ENCODE measurements at regions of chr3 and their contacts with region 1.

Region 1: DNA sequence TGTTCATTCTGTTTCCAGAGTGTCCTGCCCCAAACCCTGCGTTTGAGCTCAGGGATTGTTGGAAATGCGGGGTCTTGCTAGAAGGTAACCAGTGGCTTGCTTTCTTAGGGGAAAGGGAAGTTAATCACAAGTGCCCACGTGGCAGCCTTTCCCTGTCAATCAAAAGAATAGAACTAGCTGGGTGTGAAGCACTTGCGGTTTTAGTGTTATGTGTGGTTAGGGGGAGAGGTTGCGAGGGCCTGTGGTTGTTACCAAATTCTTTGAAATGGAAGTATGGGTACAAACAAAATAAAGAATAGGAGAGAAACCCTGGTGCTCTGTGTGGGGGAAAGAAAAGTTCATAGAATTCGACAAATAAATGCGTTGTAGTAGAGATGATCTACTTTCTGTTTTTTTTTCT is 67.6 kb downstream of the FNDC3B start:
- DNase-seq: peak; percentile 74
- H3K4me3 Mint-ChIP-seq: peak overlapping the region; percentile 59
- H3K27ac Mint-ChIP-seq: peak overlapping the region; percentile 89
- H3K4me1 Mint-ChIP-seq: peaks cover 72% of the 10 kb centered on the region
- H3K27me3 Mint-ChIP-seq: no peaks in the 10 kb centered on the region

Region 2: DNA sequence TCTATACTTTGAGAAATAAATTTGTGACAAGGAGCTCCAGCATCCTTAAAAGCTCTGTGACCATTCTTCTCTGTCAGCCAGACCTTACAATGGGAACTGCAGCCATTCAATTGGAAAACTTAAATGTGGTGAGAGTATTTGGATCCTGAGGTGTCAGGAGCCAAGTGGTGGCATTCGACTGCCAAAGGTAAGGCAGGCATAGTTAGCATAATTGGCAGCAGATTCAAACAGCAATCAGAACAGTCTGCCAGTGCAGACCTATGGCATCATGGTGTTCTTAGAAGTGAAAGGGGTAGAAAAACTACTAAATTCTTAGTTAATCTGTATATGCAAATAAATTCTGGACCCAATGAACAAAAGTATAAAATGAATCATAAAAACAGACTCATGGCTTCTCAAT is 85.8 kb before region 1 on chr3:
- CTCF ChIA-PET with region 1: no interaction called
- POLR2A ChIA-PET with region 1: no interaction called
- intact Hi-C with region 1: no loop called
- DNase-seq: no peak
- H3K4me3 Mint-ChIP-seq: no peak overlapping the region
- H3K27ac Mint-ChIP-seq: no peak overlapping the region
- H3K4me1 Mint-ChIP-seq: no peaks in the 10 kb centered on the region
- H3K27me3 Mint-ChIP-seq: no peaks in the 10 kb centered on the region

Region 3: GRCh38 chr3:172046268-172046915 is 60.6 kb before region 1 on chr3:
- CTCF ChIA-PET with region 1: interaction called, 6 read pairs
- POLR2A ChIA-PET with region 1: interaction called, 4 read pairs
- intact Hi-C with region 1: loop called (anchors 1 kb)
- DNase-seq: no peak
- H3K4me3 Mint-ChIP-seq: no peak overlapping the region
- H3K27ac Mint-ChIP-seq: peak overlapping the region; percentile 34
- H3K4me1 Mint-ChIP-seq: peaks cover 33% of the 10 kb centered on the region
- H3K27me3 Mint-ChIP-seq: no peaks in the 10 kb centered on the region

Region 4: DNA sequence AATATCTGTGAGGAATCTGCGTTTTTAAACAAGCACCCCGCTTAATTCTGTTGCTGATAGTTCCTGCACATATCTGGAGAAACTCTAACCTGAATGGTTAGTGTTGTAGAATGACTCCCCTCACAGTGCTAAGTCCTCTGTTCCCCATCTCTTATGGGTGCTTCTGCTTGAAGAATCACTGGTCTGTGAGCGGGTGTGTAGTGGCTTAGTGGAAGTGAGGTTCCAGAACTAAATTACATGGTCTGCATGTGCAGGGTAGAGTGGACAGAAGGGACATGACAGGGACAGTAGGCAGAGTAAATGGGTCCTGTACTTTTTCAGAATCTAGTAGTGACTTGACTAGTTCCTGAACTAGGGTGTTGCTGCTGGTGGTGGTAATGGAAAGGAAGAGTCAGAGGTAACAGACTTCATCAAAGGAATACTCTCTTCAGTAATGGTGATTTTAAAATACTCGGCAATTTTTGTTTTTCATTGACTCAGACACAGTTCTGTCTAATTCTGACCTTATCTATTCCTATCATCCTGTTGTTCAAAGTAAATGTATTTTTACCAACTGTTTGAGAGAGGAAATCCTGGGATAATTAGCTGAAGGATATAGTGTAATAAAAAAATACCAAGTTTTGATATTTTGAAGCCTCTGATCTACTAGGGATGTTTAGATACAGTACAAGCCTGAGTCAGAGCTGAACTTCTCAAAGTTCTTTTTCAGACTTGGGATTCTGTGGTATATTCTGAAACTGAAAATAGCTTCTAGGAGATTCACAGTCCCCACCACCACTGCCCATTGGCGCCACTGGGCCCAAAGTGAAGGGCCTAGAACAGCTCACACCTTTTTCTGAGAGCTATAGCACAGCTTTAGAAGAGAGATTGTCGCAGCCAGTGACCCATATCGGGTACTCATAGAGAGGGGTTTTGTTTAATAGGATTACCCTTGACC is 12.1 kb before region 1 on chr3:
- CTCF ChIA-PET with region 1: interaction called, 14 read pairs
- POLR2A ChIA-PET with region 1: no interaction called
- intact Hi-C with region 1: loop called (anchors 1 kb)
- DNase-seq: peak; percentile 55
- H3K4me3 Mint-ChIP-seq: no peak overlapping the region
- H3K27ac Mint-ChIP-seq: peak overlapping the region; percentile 13
- H3K4me1 Mint-ChIP-seq: peaks cover 49% of the 10 kb centered on the region
- H3K27me3 Mint-ChIP-seq: no peaks in the 10 kb centered on the region

Region 5: DNA sequence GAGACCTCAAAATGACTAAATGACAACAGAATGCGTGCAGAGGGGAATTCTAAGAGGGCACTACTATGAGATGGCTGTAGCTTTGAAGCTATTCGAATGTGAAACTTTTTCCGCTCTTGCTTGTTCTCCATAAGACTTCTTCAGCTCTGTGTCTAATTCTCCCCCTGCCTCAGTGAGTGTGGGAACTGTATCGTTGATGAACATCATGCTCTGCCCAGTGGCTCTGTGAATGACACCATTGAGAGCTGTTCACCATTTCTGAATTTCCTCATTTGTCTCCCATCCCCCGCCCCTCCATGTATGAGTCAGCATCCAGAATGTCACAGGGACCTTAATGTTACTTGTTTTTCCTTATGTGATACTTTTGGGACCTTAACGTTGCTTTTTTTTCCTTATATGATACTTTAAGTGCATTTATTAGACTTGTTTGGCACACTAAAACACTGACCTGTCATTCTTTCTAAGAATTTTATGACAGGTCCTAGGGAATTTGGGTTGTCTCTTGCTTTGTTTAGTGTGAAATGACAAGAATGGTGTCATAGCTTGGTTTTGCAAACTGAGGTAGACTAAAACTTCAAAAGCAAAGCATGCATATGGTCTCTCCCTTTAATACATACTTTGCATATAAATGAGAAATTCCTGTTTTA is 31.9 kb after region 1 on chr3:
- CTCF ChIA-PET with region 1: interaction called, 9 read pairs
- POLR2A ChIA-PET with region 1: interaction called, 7 read pairs
- intact Hi-C with region 1: loop called (anchors 1 kb)
- DNase-seq: peak; percentile 66
- H3K4me3 Mint-ChIP-seq: peak overlapping the region; percentile 33
- H3K27ac Mint-ChIP-seq: peak overlapping the region; percentile 71
- H3K4me1 Mint-ChIP-seq: peaks cover 56% of the 10 kb centered on the region
- H3K27me3 Mint-ChIP-seq: no peaks in the 10 kb centered on the region

Region 6: GRCh38 chr3:172341482-172342059 is 234.6 kb after region 1 on chr3:
- CTCF ChIA-PET with region 1: interaction called, 4 read pairs
- POLR2A ChIA-PET with region 1: no interaction called
- intact Hi-C with region 1: loop called (anchors 1 kb)
- DNase-seq: no peak
- H3K4me3 Mint-ChIP-seq: no peak overlapping the region
- H3K27ac Mint-ChIP-seq: no peak overlapping the region
- H3K4me1 Mint-ChIP-seq: no peaks in the 10 kb centered on the region
- H3K27me3 Mint-ChIP-seq: no peaks in the 10 kb centered on the region